ENCODE measurements at regions of chr3 and their contacts with region 1.

Region 1: DNA sequence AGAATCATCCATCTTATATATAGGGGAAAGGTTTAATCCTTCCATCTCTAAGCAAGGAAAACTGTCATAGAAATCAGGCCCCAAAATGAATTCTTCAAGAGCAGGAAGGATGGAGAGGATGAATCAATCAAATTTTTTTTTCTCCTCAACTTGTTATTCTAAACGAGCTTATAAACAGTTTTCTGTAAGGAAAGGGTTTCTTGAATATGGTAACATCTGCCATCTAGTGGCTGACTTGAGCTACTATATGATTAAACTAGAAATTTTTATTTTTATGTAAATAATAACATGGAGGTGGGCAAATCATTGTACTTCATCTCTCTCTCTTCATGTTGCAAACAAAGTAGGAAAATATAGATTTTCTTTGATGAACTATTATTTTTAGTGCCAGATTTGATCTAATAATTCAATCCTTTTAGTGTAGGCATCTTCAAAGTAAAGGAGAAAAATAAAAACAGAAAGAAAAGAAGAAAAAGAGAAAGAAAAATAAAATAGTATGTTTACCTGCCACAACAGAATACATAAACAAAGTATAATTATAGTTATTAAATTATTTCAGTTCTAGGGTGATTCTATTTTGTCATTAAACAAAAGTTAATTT is 146.6 kb downstream of the SERPINI1 start:
- DNase-seq: no peak

Region 2: GRCh38 chr3:166917437-166917836 is 964.7 kb before region 1 on chr3:
- intact Hi-C with region 1: no loop called
- DNase-seq: no peak

Region 3: DNA sequence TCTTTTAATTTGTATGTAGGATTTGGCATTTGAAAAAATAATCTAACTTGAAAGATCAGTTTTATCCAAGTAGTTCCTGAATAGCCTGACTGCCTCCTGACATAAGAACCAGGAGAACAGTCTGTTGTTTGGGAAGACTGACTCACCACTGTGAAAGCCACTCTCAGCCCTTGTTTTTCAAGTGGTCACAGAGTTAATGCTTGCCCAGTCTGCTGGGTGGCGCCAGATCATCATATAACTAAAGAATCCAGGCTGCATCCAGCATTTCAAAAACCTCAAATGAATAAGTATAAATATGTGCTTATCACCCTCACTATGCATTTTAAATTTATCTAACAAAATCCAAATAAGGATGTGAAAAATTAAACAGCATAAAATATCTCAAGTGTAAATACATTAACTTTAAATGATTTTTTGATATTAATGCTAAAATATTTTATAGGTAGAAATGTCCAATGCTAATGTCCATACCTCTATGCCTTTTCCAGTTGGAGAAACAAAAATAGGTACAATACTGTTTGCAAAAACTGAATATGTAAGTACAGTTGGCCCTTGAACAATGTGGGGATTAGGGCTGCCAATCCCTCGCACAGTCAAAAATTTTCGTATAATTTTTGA is 475.2 kb before region 1 on chr3:
- intact Hi-C with region 1: loop called in 1 of 2 experiments (anchors 10 kb)
- DNase-seq: no peak

Region 4: DNA sequence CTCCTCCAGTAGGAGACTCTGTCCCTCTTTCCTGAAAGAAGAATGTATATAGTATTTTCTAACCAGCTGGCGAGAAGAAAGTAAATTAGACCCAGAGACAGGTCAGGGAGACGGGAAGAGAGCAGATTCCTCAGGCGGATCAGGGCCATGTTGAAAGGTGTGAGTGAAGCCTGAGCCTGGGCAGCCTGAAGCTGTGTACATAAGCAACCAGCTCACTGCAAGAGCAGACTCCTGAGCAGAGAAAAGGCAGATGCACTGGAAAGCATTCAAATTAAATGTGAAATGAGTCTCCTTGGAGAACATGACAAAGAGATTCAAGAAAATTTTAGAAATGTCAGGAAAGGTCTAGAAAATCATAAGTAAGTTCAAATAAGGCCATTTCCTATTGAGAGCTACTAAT is 47.8 kb after region 1 on chr3:
- intact Hi-C with region 1: no loop called
- DNase-seq: no peak

Region 5: DNA sequence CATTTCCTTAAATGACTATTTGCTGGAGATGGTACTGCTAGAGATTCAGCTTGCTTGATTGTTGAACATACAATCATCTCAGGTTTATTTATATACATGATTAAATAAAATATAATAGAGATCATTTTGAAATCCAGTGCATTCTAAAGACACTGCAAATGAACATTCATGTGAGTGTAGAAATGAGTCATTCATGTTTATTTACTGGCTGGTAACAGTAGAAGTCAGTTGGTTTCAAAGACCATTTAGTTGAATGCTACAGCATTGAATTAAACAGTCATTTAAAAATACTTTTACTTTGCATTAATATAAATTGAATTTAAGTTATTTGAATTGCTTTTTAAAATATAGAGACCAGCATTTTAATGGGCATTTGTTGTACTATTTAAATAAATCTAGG is 765.4 kb after region 1 on chr3:
- intact Hi-C with region 1: no loop called
- DNase-seq: no peak